SK-N-SH (cell line): ENCODE measurements at regions of chr6 and their contacts with region 1.

Region 1: DNA sequence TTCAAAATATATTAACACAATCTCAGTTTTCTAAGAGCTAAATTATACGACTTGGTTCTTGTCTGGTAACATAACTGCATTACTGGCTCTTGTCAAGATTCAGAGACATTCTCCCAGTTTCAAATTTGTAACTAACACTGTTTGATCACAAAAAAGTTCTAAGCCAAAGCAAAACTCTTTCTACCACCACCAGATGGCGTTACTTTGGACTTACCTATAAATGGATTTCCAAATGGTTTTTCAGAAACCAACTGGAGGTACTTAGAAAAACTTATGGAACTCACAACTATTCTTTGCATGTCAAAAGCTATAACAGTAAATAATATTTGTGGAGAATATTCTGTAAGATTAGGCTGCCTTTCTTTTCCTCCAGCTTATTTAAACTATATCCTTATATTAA is 34.2 kb upstream of the GFRAL start:
- DNase-seq: no peak
- H3K4me3 ChIP-seq: no peak overlapping the region
- H3K27ac ChIP-seq: no peak overlapping the region
- H3K4me1 ChIP-seq: no peaks in the 10 kb centered on the region
- H3K27me3 ChIP-seq: no peaks in the 10 kb centered on the region
- CTCF ChIP-seq: peak; percentile 57
- EP300 ChIP-seq: no peak
- RAD21 ChIP-seq: peak; percentile 6; the same call in 1 of the 2 replicates

Region 2: GRCh38 chr6:55108808-55109146 is 184.3 kb before region 1 on chr6:
- CTCF ChIA-PET with region 1: no interaction called
- POLR2A ChIA-PET with region 1: no interaction called
- DNase-seq: no peak
- H3K4me3 ChIP-seq: no peak overlapping the region
- H3K27ac ChIP-seq: no peak overlapping the region
- H3K4me1 ChIP-seq: no peaks in the 10 kb centered on the region
- H3K27me3 ChIP-seq: no peaks in the 10 kb centered on the region
- CTCF ChIP-seq: no peak
- EP300 ChIP-seq: no peak
- RAD21 ChIP-seq: no peak

Region 3: GRCh38 chr6:55276745-55277530 is 16.2 kb before region 1 on chr6:
- CTCF ChIA-PET with region 1: interaction called, 18 read pairs
- POLR2A ChIA-PET with region 1: no interaction called
- DNase-seq: peak; percentile 19
- H3K4me3 ChIP-seq: no peak overlapping the region; a peak in 1 of 4 replicates
- H3K27ac ChIP-seq: peak overlapping the region in 1 of 2 experiments; percentile 22; a peak in 1 of 4 replicates
- H3K4me1 ChIP-seq: peaks cover 0 to 4% of the 10 kb centered on the region in 2 experiments; a peak in 1 of 4 replicates
- H3K27me3 ChIP-seq: no peaks in the 10 kb centered on the region; the same call in 1 of the 2 replicates
- CTCF ChIP-seq: peak; percentile 72
- EP300 ChIP-seq: no peak
- RAD21 ChIP-seq: peak; percentile 82

Region 4: DNA sequence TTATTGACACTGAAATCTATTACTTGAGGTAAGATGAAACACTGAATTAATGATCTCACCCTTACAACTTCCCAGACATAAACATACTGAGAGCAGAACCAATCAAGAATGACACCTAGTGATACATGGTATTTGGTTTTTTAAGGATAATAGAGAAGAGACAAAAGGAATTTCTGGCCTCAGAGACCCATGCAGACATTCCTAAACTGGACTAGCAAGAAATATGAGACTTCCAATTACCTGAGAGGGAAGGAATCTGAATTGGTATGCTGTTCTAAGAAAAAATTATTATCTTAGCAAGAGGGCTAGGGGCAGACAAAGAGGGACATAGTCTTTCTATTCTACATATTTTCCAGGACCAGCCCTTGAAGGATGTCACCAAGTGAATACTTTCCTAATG is 441.1 kb after region 1 on chr6:
- CTCF ChIA-PET with region 1: no interaction called
- POLR2A ChIA-PET with region 1: no interaction called
- DNase-seq: no peak
- H3K4me3 ChIP-seq: no peak overlapping the region
- H3K27ac ChIP-seq: no peak overlapping the region
- H3K4me1 ChIP-seq: no peaks in the 10 kb centered on the region
- H3K27me3 ChIP-seq: no peaks in the 10 kb centered on the region
- CTCF ChIP-seq: no peak
- EP300 ChIP-seq: no peak
- RAD21 ChIP-seq: no peak